ENCODE measurements at regions of chr3 and their contacts with region 1.

Region 1: DNA sequence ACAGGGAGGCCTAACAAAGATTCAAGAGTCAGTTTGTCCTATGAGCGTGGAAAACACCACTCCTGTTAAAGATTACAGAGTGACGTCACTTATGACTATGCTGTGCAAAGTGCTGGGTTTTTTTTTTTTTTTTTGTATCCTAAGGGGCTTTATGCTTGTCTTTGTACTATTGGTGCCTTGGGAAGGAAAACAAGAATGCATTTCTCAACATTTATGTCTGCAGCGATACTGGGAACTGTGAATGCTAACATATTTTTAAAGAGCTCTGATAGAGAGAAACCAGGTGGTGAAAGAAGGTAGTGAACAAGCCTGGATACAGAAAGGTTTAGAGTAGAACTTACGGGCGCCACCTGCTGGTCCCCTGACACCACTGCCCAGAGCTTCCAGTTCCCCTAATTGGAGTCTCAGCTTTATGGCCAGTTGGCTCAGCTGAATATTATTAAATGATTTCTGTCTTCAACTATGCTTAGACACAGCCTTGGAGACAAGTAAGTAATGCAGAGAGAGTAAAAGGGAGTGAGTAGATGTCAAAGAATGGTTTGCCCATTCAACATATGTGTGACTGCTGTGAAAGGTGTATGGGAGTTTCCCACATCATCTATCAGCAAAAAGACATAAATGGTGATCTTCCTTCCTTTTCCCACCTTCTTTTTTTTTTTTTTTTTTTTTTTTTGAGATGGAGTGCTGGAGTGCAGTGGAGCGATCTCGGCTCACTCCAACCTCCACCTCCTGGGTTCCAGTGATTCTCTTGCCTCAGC is 807.9 kb upstream of the CFAP20DC start:
- DNase-seq: peak; percentile 70
- ATAC-seq: peak; percentile 99
- H3K4me3 ChIP-seq: no peak overlapping the region
- H3K27ac ChIP-seq: no peak overlapping the region
- H3K4me1 ChIP-seq: no peaks in the 10 kb centered on the region
- H3K27me3 ChIP-seq: no peaks in the 10 kb centered on the region
- CTCF ChIP-seq: peak; percentile 81
- EP300 ChIP-seq: no peak
- POLR2A ChIP-seq: no peak
- RAD21 ChIP-seq: peak; percentile 70

Region 2: GRCh38 chr3:59212128-59212779 is 645.5 kb before region 1 on chr3:
- CTCF ChIA-PET with region 1: interaction called, 9 read pairs
- POLR2A ChIA-PET with region 1: no interaction called
- in situ Hi-C with region 1: loop called (anchors 25 kb)
- intact Hi-C with region 1: no loop called
- DNase-seq: peak; percentile 26
- ATAC-seq: peak; percentile 81
- H3K4me3 ChIP-seq: no peak overlapping the region
- H3K27ac ChIP-seq: no peak overlapping the region
- H3K4me1 ChIP-seq: no peaks in the 10 kb centered on the region
- H3K27me3 ChIP-seq: peaks cover 0 to 3% of the 10 kb centered on the region in 2 experiments; a peak in 1 of 5 replicates
- CTCF ChIP-seq: peak; percentile 65
- EP300 ChIP-seq: no peak
- POLR2A ChIP-seq: no peak
- RAD21 ChIP-seq: no peak

Region 3: DNA sequence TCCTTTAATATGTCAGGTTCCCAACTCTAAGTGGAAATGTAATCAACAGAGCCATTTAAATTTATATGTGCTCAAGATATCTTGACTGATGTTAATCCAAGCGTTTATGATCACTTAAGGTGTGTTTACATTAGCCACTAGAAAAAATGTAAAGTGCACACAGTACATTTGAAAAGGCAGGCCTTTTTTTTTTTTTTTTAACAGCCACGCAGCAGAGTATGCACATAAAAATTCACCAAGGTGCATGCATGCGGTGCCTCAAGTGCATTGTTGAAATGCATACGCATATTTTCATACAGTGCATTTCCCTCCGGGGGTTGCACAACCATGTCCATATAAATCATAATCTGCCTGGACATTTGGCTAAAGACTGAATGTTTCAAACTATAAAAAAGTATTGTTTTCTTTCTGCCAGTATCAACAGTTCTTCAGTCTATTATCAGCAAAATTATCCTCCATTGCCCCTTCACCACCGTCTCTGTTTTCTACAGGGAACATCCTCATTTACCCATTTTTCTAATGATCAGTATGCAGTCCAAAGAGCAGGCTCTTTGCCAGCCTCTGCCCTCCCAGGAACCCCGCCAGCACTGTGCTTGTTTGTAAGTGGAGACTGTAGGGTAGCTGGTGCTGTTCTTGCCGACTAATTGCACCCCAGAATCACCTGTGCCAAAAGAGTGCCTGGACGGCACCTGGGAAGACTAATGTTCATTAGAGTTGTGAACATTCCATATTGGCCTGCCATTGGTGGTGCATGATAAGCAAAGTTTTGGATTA is 196.7 kb before region 1 on chr3:
- CTCF ChIA-PET with region 1: no interaction called
- POLR2A ChIA-PET with region 1: no interaction called
- in situ Hi-C with region 1: no loop called
- intact Hi-C with region 1: loop called (anchors 10 kb)
- DNase-seq: no peak
- ATAC-seq: no peak
- H3K4me3 ChIP-seq: no peak overlapping the region
- H3K27ac ChIP-seq: no peak overlapping the region
- H3K4me1 ChIP-seq: peaks cover 14% of the 10 kb centered on the region
- H3K27me3 ChIP-seq: no peaks in the 10 kb centered on the region
- CTCF ChIP-seq: no peak
- EP300 ChIP-seq: no peak
- POLR2A ChIP-seq: no peak
- RAD21 ChIP-seq: no peak